HCT116 (cell line): ENCODE measurements at regions of chr20 and their contacts with region 1.

Region 1: GRCh38 chr20:41028348-41029148 is at the start of gene TOP1:
- DNase-seq: peak; percentile 99
- ATAC-seq: peak; percentile 97
- H3K4me3 ChIP-seq: peak within 1 kb of the TSS; percentile 79 to 86
- H3K27ac ChIP-seq: peak within 1 kb of the TSS; percentile 88
- H3K4me1 ChIP-seq: peaks cover 28 to 43% of the 10 kb centered on the region in 2 experiments
- H3K27me3 ChIP-seq: no peaks in the 10 kb centered on the region
- CTCF ChIP-seq: no peak
- POLR2A ChIP-seq: peak; percentile 83
- RAD21 ChIP-seq: no peak
- total RNA-seq, gene TOP1: 190 TPM

Region 2: GRCh38 chr20:40754339-40754943 is 274.1 kb before region 1 on chr20:
- CTCF ChIA-PET with region 1: no interaction called
- POLR2A ChIA-PET with region 1: no interaction called
- RAD21 ChIA-PET with region 1: no interaction called
- intact Hi-C with region 1: no loop called
- DNase-seq: no peak
- ATAC-seq: no peak
- H3K4me3 ChIP-seq: no peak overlapping the region
- H3K27ac ChIP-seq: no peak overlapping the region
- H3K4me1 ChIP-seq: no peaks in the 10 kb centered on the region; a peak in 1 of 4 replicates
- H3K27me3 ChIP-seq: peaks cover 9% of the 10 kb centered on the region; the same call in 1 of the 2 replicates
- CTCF ChIP-seq: no peak
- POLR2A ChIP-seq: no peak
- RAD21 ChIP-seq: no peak

Region 3: DNA sequence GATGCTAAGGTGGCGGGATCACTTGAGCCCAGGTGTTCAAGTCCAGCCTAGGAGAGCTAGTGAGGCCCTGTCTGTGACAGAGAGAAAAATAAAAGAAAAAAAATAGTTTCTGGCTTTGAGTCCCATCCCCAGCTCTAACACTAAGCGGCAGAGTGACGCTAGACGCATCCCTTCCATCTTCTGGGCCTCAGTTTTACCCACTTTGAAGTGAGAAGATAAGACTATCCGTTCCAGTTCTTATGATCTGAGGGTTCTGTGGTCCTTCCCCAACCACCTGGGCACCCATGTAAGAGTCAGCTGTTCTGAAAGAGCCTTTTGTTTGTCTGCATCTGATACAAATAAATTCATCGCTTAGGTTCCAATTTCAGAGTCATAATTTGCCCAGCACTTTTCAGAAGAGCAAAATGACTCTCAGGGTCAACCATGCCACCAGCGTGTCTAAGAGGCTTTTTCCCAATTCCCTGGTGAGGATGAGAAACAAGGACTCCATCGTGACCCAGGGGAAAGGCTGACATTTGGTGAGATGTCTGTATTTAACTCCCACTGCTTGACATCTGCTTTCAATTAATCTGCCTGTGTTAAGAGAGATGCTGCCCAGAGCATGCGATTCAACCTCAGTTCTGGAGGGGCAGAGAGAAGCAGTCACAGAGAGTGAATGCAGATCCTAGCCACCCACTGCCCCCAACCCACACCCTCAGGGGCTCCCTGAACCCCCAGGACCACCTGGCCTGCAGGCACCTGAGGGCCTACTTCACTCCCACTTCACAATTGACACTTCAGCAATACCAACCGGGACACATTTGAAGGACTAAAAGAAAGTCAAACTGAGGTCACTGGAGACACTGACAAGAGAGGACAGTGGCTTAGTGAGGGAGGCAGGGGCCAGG is 131.5 kb before region 1 on chr20:
- CTCF ChIA-PET with region 1: no interaction called
- POLR2A ChIA-PET with region 1: no interaction called
- RAD21 ChIA-PET with region 1: no interaction called
- intact Hi-C with region 1: no loop called
- DNase-seq: no peak
- ATAC-seq: no peak
- H3K4me3 ChIP-seq: no peak overlapping the region
- H3K27ac ChIP-seq: no peak overlapping the region
- H3K4me1 ChIP-seq: no peaks in the 10 kb centered on the region
- H3K27me3 ChIP-seq: no peaks in the 10 kb centered on the region
- CTCF ChIP-seq: no peak
- POLR2A ChIP-seq: no peak
- RAD21 ChIP-seq: no peak

Region 4: DNA sequence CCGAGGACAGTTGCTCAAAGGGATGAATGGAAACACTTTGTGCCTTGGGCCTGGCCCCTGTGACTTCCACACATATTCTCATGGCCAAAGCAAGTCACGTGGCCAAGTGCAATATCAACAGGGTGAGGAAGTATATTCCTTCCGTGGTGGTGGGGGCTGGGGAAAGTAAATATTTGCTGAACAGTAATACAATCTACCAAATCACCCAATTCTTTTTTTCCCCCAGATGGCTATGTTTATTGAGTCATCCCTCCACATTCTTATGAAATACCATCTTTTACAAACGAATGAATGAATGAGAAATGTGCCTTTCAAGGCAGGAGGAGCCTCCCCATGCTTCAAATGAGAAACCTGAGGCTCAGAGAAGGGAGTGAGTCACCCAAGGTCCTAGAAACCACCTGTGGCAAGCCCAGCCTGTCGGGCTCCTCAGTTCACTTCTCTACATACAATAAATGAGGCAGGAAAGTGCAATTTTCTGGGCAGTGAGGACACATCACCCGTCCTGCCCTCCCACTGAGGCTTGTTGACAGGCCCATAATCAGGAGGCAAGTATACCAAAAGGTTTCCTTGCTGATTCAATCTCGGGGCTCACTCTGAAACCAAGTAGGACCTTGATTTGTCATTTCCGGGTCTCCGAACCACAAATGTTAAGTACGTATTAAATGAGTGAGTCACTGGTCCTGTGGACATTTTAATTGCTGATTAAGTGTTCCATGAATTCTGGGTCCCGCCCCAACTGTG is 25.2 kb before region 1 on chr20:
- CTCF ChIA-PET with region 1: no interaction called
- POLR2A ChIA-PET with region 1: interaction called, 14 read pairs
- RAD21 ChIA-PET with region 1: no interaction called
- intact Hi-C with region 1: loop called (anchors 1 kb)
- DNase-seq: peak; percentile 98
- ATAC-seq: peak; percentile 84
- H3K4me3 ChIP-seq: peak overlapping the region; percentile 25 to 49
- H3K27ac ChIP-seq: peak overlapping the region; percentile 100
- H3K4me1 ChIP-seq: peaks cover 64 to 76% of the 10 kb centered on the region in 2 experiments
- H3K27me3 ChIP-seq: no peaks in the 10 kb centered on the region
- CTCF ChIP-seq: no peak
- POLR2A ChIP-seq: peak; percentile 57
- RAD21 ChIP-seq: no peak

Region 5: DNA sequence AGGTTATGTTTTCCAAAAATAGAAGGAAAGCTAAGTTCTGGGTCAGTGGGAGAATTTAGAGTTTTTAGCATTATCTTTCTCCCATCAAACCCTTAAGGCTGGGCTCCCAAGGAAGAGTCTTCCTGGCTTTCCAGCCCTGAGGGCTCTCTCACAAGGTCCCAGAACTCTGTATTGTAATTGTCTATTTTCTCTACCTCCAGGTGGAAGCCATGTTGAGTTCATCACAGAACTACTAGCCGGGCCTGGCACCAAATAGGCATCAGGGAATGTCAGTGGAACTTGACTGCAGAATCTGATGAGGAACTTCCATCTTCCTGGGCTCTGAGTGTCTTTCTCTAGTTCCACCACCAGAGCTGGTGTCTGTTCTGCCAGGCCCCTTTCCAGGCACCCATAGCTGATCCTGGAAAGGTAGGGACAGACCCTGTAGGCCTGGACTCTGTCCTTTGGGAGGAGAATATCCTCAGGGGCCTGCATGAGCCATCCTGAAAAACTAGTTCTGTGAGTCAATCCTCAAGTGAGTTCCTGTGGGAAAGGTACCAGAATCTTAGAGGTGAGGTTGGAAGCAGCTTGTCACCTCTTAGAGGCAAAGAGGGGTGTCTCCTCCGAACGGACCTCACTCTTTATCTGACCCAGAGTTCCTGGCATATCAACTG is 11.0 kb before region 1 on chr20:
- CTCF ChIA-PET with region 1: no interaction called
- POLR2A ChIA-PET with region 1: interaction called, 13 read pairs
- RAD21 ChIA-PET with region 1: no interaction called
- intact Hi-C with region 1: no loop called
- DNase-seq: no peak
- ATAC-seq: peak; percentile 69
- H3K4me3 ChIP-seq: no peak overlapping the region
- H3K27ac ChIP-seq: 0 out of 2 replicates have a peak overlapping the region, but pooled peaks have one; percentile 13
- H3K4me1 ChIP-seq: peaks cover 21 to 43% of the 10 kb centered on the region in 2 experiments
- H3K27me3 ChIP-seq: no peaks in the 10 kb centered on the region
- CTCF ChIP-seq: peak in 1 of 3 experiments; percentile 30; a peak in 2 of 6 replicates
- POLR2A ChIP-seq: no peak
- RAD21 ChIP-seq: no peak